Natural killer cell (primary cell): ENCODE measurements at regions of chr7 and their contacts with region 1.

Region 1: DNA sequence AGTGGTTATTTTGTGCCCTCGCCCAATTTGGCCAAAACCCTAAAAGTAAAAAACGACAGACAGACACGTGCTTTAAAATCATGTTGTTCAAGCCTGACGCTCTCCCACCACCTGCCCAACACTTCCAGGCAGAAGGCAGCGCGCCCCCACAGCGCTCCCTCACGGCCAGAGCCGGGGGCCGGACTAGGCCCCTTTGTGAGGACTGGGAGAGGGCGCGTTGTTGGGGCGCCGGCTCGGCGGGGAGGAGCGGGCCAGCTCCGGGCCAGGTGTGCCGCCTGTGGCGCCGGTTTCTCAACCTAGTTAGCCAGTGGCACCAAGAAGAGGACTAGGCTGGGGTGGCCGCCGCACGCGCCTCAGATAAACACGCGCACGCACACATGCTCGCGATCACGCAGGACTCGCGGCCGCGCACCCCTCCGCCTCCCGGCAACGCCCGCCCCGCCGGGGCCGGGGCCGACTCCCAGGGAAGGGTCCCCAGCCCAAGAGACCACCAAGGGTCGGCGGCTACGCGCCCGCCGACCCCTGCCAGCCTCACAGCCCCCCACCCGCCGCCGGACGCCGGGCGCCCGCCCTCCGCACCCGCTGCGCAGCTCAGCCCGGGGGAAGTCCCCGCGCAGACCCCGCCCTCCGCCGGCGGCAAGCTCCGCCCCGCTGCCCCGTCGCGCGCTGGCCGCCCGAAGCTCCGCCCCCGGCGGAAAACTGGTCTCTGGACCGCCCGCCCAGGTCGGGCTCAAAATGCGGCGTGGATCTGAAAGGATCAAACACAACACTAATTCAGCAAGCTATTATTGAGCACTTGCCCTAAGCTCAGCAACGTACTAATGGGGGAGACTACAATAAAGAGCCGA is at the start of gene IMMP2L:
- DNase-seq: peak; percentile 94 to 95
- ATAC-seq: peak; percentile 96 to 98 (median 96)
- H3K4me3 ChIP-seq: peak within 1 kb of the TSS; percentile 69
- H3K4me3 Mint-ChIP-seq: peak within 1 kb of the TSS; percentile 94
- H3K27ac ChIP-seq: peak within 1 kb of the TSS; percentile 80
- H3K27ac Mint-ChIP-seq: peak within 1 kb of the TSS; percentile 89 to 93
- H3K4me1 ChIP-seq: peaks cover 13% of the 10 kb centered on the region
- H3K4me1 Mint-ChIP-seq: peaks cover 5 to 23% of the 10 kb centered on the region in 2 donors
- H3K27me3 ChIP-seq: no peaks in the 10 kb centered on the region
- H3K27me3 Mint-ChIP-seq: peaks cover 11 to 23% of the 10 kb centered on the region in 2 donors
- CTCF ChIP-seq: peak; percentile 16
- total RNA-seq, gene IMMP2L: 6.9 to 9.2 (median 8.7) TPM

Region 2: GRCh38 chr7:112206238-112207044 is 644.3 kb after region 1 on chr7 and contains the starts of genes DOCK4 and ZNF277:
- intact Hi-C with region 1: loop called (anchors 10 kb)
- DNase-seq: peak; percentile 99
- ATAC-seq: peak; percentile 88 to 95 (median 89)
- H3K4me3 ChIP-seq: peak within 1 kb of the TSS; percentile 83
- H3K4me3 Mint-ChIP-seq: peak within 1 kb of the TSS; percentile 99
- H3K27ac ChIP-seq: peak within 1 kb of the TSS; percentile 62
- H3K27ac Mint-ChIP-seq: peak within 1 kb of the TSS; percentile 93 to 99
- H3K4me1 ChIP-seq: peaks cover 21% of the 10 kb centered on the region
- H3K4me1 Mint-ChIP-seq: peaks cover 38 to 41% of the 10 kb centered on the region in 2 donors
- H3K27me3 ChIP-seq: peaks cover 33% of the 10 kb centered on the region
- H3K27me3 Mint-ChIP-seq: peaks cover 30 to 38% of the 10 kb centered on the region in 2 donors
- CTCF ChIP-seq: no peak
- total RNA-seq, gene DOCK4: 0.61 to 2.4 (median 0.89) TPM
- total RNA-seq, gene ZNF277: 13.0 to 20.8 (median 16.7) TPM

Region 3: GRCh38 chr7:112939574-112940314 is 1377.6 kb after region 1 on chr7:
- intact Hi-C with region 1: loop called (anchors 2 kb)
- DNase-seq: peak; percentile 97 to 100
- ATAC-seq: peak; percentile 94 to 99 (median 97)
- H3K4me3 ChIP-seq: peak overlapping the region; percentile 63
- H3K4me3 Mint-ChIP-seq: peak overlapping the region; percentile 89
- H3K27ac ChIP-seq: peak overlapping the region; percentile 71
- H3K27ac Mint-ChIP-seq: peak overlapping the region; percentile 85 to 89
- H3K4me1 ChIP-seq: peaks cover 15% of the 10 kb centered on the region
- H3K4me1 Mint-ChIP-seq: peaks cover 32 to 52% of the 10 kb centered on the region in 2 donors
- H3K27me3 ChIP-seq: peaks cover 5% of the 10 kb centered on the region
- H3K27me3 Mint-ChIP-seq: peaks cover 4 to 9% of the 10 kb centered on the region in 2 donors
- CTCF ChIP-seq: no peak